ENCODE measurements at regions of chr4 and their contacts with region 1.

Region 1: GRCh38 chr4:155442267-155443105 is 65.7 kb upstream of the MAP9 start:
- DNase-seq: peak; percentile 76
- ATAC-seq: peak; percentile 94
- H3K4me3 ChIP-seq: no peak overlapping the region
- H3K27ac ChIP-seq: peak overlapping the region; percentile 48; the same call in 1 of the 2 replicates
- H3K4me1 ChIP-seq: peaks cover 2% of the 10 kb centered on the region; the same call in 1 of the 2 replicates
- H3K27me3 ChIP-seq: no peaks in the 10 kb centered on the region
- CTCF ChIP-seq: peak; percentile 92
- POLR2A ChIP-seq: no peak
- RAD21 ChIP-seq: peak; percentile 92

Region 2: DNA sequence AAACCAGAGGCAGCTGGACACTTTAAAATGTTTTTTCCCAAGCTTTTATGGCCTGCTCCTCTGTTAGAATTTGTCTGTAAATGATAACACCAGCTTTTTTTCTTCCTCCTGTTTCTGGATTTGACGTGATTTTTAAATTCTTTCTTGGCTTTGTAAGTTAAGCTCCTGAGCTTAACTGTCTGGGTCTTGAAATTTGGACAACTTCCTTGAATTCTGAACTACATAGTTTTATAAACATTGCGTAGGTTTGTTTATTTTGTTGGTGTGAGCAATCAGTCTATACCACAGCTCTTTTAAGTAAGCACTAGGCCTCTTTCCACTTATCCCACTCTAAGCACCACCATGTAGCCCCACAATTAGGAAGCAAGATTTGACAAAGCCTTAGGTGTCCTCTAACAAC is 79.7 kb after region 1 on chr4:
- CTCF ChIA-PET with region 1: interaction called, 4 read pairs
- POLR2A ChIA-PET with region 1: no interaction called
- dilution Hi-C with region 1: no loop called
- in situ Hi-C with region 1: no loop called
- intact Hi-C with region 1: loop called (anchors 5 kb)
- DNase-seq: peak; percentile 93
- ATAC-seq: peak; percentile 86
- H3K4me3 ChIP-seq: no peak overlapping the region
- H3K27ac ChIP-seq: peak overlapping the region; percentile 48; the same call in 1 of the 2 replicates
- H3K4me1 ChIP-seq: peaks cover 11% of the 10 kb centered on the region
- H3K27me3 ChIP-seq: no peaks in the 10 kb centered on the region
- CTCF ChIP-seq: no peak
- POLR2A ChIP-seq: no peak
- RAD21 ChIP-seq: peak; percentile 1; the same call in 1 of the 2 replicates

Region 3: GRCh38 chr4:155777971-155778735 is 335.7 kb after region 1 on chr4:
- CTCF ChIA-PET with region 1: no interaction called
- POLR2A ChIA-PET with region 1: no interaction called
- dilution Hi-C with region 1: no loop called
- in situ Hi-C with region 1: loop called (anchors 10 kb)
- intact Hi-C with region 1: loop called (anchors 2 kb)
- DNase-seq: peak; percentile 84
- ATAC-seq: peak; percentile 81
- H3K4me3 ChIP-seq: no peak overlapping the region
- H3K27ac ChIP-seq: peak overlapping the region; percentile 75; the same call in 1 of the 2 replicates
- H3K4me1 ChIP-seq: peaks cover 7% of the 10 kb centered on the region
- H3K27me3 ChIP-seq: no peaks in the 10 kb centered on the region
- CTCF ChIP-seq: no peak
- POLR2A ChIP-seq: no peak
- RAD21 ChIP-seq: no peak